Lower leg skin (tissue), 4 donors: ENCODE measurements at regions of chr16 and their contacts with region 1.

Region 1: DNA sequence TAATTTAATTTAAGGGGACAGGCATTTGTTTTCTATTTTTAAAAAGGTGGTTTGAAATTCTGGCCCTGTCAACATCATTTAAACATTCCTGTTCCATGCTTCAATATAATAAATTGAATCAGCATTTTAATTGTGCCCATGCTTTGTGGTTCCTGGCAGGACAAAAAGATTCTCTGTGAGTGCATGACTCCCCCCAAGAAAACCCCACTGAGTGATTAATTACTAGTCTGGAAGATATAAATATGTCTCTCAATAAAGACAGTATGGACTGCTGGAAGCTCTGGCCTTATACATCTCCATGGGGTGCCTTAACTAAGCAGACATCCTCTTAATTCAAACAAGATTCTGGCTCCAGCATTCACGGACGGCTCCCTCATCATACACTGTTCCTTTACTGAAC is 95.0 kb upstream of the PSMD7 start:
- DNase-seq: no peak
- H3K4me3 ChIP-seq: no peak overlapping the region
- CTCF ChIP-seq: no peak
- POLR2A ChIP-seq: no peak

Region 2: GRCh38 chr16:72727565-72727964 is 1474.0 kb before region 1 on chr16:
- intact Hi-C with region 1: loop called (anchors 5 kb)
- DNase-seq: no peak
- H3K4me3 ChIP-seq: no peak overlapping the region
- CTCF ChIP-seq: no peak
- POLR2A ChIP-seq: no peak

Region 3: GRCh38 chr16:74320707-74321106 is 119.1 kb after region 1 on chr16:
- intact Hi-C with region 1: no loop called
- DNase-seq: no peak
- H3K4me3 ChIP-seq: no peak overlapping the region
- CTCF ChIP-seq: no peak
- POLR2A ChIP-seq: no peak